ENCODE measurements at regions of chr9 and their contacts with region 1.

Region 1: DNA sequence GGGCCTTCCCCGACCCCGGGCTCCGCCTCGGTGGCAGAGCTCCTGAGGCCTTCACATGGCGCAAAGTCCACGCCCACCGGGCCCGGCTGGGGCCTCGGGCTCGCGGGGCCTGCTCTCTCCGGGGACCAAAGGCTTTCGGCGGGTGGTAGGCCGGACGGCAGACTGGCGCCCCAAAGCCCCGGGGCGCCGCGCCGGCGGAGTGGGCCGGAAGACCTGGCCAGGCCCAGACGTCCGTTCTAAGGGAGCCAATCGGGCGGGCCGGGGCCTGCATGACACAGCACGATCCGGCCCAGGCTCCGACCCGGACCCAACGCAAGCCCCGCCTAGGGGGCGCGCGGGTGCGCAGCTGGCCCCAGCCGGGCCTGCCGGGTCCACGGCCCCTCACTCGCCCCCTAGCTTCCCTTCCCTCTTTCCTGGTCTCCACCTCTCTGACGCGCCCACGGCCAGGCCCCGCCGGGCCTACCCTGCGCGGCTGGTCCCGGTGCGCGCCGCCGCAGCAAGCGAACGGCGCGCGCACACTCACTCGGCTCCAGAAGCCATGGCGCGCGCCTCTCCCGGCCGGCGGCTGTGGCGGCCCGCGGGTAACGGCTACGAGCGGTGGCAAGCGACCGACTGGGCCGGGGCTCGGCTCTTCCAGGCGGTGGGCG is 488 bp downstream of the VCP start:
- DNase-seq: peak; percentile 59 to 89
- H3K4me3 ChIP-seq: peak overlapping the region; percentile 75 to 94 (median 87)
- H3K27ac ChIP-seq: peak overlapping the region; percentile 93
- H3K4me1 ChIP-seq: peaks cover 4 to 12% (median 7%) of the 10 kb centered on the region in 4 experiments
- H3K27me3 ChIP-seq: no peaks in the 10 kb centered on the region
- CTCF ChIP-seq: peak; percentile 26 to 48 (median 45); a peak in 3 of 4 replicates
- EP300 ChIP-seq: no peak
- POLR2A ChIP-seq: peak in 1 of 2 experiments; percentile 90; a peak in 1 of 3 replicates
- RAD21 ChIP-seq: peak in 1 of 2 experiments; percentile 8; a peak in 1 of 4 replicates

Region 2: DNA sequence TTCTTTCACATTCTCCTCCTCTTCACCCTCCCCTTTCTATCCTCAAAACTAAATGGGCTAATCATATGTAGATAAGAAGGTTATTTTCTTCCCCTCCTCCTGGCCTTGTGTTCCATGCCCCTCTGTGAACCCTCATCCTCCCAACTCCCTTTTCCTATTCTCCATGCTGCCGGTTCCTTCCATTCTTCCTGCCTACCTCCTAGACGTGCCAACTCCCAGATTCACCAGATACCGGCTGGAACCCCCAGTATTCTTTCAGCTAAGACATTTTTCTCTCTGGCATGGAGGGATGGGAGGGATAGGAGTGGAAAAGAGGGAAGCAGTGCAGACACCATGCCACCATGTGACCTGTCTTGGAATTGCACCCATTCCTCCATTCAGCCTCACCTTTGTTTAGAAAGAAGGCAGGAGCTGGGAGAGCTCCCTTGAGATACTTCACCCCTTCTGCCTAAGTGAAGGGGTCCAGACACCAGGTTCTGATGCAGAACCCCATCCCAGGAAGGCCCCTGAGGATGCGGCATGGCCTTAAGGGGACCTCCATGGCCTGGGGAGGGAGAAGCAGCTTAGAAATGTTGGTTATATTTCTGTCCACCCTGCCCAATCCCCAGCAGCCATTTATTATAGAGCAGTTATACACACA is 77.6 kb before region 1 on chr9:
- CTCF ChIA-PET with region 1: interaction called, 5 read pairs
- POLR2A ChIA-PET with region 1: interaction called, 29 read pairs
- DNase-seq: peak in 1 of 2 experiments; percentile 71
- H3K4me3 ChIP-seq: no peak overlapping the region
- H3K27ac ChIP-seq: peak overlapping the region; percentile 35; the same call in 1 of the 2 replicates
- H3K4me1 ChIP-seq: peaks cover 18 to 36% (median 30%) of the 10 kb centered on the region in 4 experiments
- H3K27me3 ChIP-seq: no peaks in the 10 kb centered on the region
- CTCF ChIP-seq: peak; percentile 61 to 85 (median 73)
- EP300 ChIP-seq: no peak
- POLR2A ChIP-seq: no peak
- RAD21 ChIP-seq: peak; percentile 73 to 78

Region 3: DNA sequence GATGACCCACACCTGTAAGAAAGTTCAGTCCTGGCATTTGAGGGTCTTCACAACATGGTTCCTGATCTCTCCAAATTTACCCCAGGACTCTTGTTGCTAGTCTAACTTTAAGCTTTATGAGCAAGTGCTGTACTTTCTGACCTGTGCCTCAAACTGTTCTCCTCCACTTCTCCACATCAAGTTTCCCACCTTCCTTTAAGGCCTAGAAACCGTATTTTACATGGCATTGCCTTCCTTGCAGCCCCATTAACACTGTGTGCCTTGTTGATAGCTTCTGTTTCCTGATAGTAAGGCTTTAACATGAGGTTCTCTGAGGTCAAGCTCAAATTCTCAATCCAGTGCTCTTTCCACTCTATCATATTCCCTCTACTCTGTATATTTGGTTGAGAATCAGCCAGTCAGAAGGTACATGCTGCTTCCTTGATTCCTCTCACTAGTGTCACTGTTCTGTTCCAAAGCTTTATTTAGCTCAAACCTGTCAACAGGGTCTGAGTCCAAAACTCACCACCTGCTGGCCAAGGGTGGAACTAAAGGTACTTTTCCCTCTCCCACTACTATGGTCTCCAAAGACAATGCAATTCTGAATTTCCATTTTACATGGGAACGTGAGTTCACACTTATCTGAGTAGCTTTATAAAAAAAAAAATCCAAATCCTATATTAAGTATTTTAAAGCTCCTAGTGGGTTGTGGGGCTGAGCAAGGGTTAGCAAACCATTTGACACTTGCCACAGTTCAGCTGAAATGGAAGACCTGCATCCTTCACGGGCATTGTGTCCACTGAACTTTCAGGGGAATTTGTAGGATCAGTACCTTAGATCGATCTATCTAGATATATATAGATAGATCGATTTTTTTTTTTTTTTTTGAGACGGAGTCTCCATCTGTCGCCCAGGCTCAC is 20.6 kb before region 1 on chr9:
- CTCF ChIA-PET with region 1: interaction called, 50 read pairs
- POLR2A ChIA-PET with region 1: interaction called, 43 read pairs
- DNase-seq: peak in 1 of 2 experiments; percentile 84
- H3K4me3 ChIP-seq: no peak overlapping the region
- H3K27ac ChIP-seq: no peak overlapping the region
- H3K4me1 ChIP-seq: no peaks in the 10 kb centered on the region
- H3K27me3 ChIP-seq: no peaks in the 10 kb centered on the region
- CTCF ChIP-seq: peak in 2 of 3 experiments; percentile 63 to 78; a peak in 3 of 4 replicates
- EP300 ChIP-seq: no peak
- POLR2A ChIP-seq: no peak
- RAD21 ChIP-seq: peak; percentile 58 to 64

Region 4: DNA sequence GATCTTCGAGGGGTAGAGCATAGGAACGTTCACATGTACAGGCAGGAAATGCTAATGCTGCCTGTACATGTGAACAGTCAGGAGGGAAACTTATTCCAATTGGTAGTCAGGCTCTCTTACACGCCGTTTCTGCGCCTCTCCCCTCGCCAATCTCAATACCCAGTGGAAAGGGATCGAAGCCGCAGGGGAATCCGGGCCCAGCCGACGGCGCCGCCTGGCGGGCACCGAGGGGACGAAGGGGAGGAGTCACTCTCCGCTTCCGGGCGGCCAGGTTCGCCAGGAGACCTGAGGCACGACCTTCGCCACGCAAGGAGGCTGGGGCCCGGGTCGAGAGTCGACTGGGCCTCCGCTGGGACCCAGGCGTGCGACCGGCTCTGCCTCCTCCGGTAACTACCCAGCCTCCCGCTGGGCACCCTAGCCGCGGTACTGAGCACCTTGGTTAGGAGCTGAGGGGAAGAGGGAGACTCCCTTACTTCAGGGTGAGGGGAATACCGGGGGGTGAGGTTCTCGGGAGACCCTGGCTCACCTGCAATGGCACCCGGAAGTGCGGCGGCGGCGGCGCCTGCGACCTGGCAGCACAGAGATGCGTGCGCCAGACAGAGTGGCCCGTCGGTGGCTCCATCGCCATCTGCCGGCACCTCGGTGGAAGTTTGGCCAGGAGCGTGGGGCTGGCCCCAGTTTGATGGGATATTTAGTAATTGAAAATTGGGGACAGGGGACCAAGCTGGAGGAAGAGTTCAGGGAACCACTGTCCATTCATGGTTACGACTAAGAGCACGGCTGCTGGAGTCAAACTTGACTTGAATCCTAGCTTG is 24.3 kb after region 1 on chr9 and contains the start of gene PIGO:
- CTCF ChIA-PET with region 1: interaction called, 46 read pairs
- POLR2A ChIA-PET with region 1: interaction called, 440 read pairs
- DNase-seq: peak; percentile 74 to 96
- H3K4me3 ChIP-seq: peak within 1 kb of the TSS; percentile 69 to 98 (median 86)
- H3K27ac ChIP-seq: peak within 1 kb of the TSS; percentile 96
- H3K4me1 ChIP-seq: peaks cover 0 to 2% (median under 1%) of the 10 kb centered on the region in 4 experiments; a peak in 3 of 7 replicates
- H3K27me3 ChIP-seq: no peaks in the 10 kb centered on the region
- CTCF ChIP-seq: peak; percentile 88 to 96 (median 93)
- EP300 ChIP-seq: no peak
- POLR2A ChIP-seq: peak; percentile 94 to 98
- RAD21 ChIP-seq: peak; percentile 55 to 72
- total RNA-seq, gene PIGO: 20.3 and 20.5 TPM in 2 replicates

Region 5: DNA sequence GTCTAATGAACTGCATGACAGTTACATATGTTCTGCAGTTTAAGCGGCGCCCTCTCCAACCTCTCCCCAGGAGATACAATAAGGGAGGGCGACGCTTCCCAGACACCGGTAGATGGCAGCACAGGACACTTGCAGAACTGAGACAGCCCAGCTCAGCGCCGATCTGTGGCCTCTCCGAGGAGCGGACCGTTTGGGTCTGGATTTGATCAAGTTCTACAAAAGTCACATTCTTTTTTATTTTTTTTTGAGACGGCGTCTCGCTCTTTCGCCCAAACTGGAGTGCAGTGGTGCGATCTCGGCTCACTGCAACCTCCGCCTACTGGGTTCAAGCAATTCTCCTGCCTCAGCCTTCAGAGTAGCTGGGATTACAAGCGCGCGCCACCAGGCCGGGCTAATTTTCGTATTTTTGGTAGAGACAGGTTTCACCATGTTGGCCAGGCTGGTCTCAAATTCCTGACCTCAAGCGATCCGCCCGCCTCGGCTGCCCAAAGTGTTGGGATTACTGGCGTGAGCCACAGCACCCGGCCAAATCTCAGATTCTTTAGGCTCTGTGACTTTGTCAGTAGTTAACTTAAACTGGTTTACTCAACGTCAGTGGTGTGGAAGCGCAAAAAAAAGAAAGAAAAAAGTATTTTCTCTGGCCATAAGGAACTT is 45.1 kb after region 1 on chr9:
- CTCF ChIA-PET with region 1: no interaction called
- POLR2A ChIA-PET with region 1: interaction called, 15 read pairs
- DNase-seq: peak; percentile 83 to 87
- H3K4me3 ChIP-seq: peak overlapping the region; percentile 49 to 79 (median 65); a peak in 7 of 8 replicates
- H3K27ac ChIP-seq: no peak overlapping the region
- H3K4me1 ChIP-seq: peaks cover 4 to 19% (median 10%) of the 10 kb centered on the region in 4 experiments; a peak in 6 of 7 replicates
- H3K27me3 ChIP-seq: no peaks in the 10 kb centered on the region
- CTCF ChIP-seq: peak; percentile 90 to 98 (median 90)
- EP300 ChIP-seq: no peak
- POLR2A ChIP-seq: peak in 1 of 2 experiments; percentile 51; a peak in 1 of 3 replicates
- RAD21 ChIP-seq: peak; percentile 93 to 95

Region 6: GRCh38 chr9:35277628-35278359 is 205.9 kb after region 1 on chr9:
- CTCF ChIA-PET with region 1: no interaction called
- POLR2A ChIA-PET with region 1: no interaction called
- DNase-seq: no peak
- H3K4me3 ChIP-seq: no peak overlapping the region
- H3K27ac ChIP-seq: no peak overlapping the region
- H3K4me1 ChIP-seq: no peaks in the 10 kb centered on the region
- H3K27me3 ChIP-seq: no peaks in the 10 kb centered on the region
- CTCF ChIP-seq: no peak
- EP300 ChIP-seq: no peak
- POLR2A ChIP-seq: no peak
- RAD21 ChIP-seq: no peak

Measured in H1 (cell line).